Adrenal gland (tissue), 19 donors: ENCODE measurements at regions of chr5 and their contacts with region 1.

Region 1: GRCh38 chr5:140362860-140363630 is 3.1 kb downstream of the SLC4A9 start:
- DNase-seq: peak; percentile 77 to 91 (median 82)
- H3K4me3 ChIP-seq: peak overlapping the region in 1 of 4 donors; percentile 36
- H3K27ac ChIP-seq: no peak overlapping the region
- H3K4me1 ChIP-seq: peaks cover 0 to 5% of the 10 kb centered on the region in 2 donors
- H3K27me3 ChIP-seq: no peaks in the 10 kb centered on the region
- CTCF ChIP-seq: peak; percentile 73 to 93 (median 88)
- POLR2A ChIP-seq: no peak

Region 2: DNA sequence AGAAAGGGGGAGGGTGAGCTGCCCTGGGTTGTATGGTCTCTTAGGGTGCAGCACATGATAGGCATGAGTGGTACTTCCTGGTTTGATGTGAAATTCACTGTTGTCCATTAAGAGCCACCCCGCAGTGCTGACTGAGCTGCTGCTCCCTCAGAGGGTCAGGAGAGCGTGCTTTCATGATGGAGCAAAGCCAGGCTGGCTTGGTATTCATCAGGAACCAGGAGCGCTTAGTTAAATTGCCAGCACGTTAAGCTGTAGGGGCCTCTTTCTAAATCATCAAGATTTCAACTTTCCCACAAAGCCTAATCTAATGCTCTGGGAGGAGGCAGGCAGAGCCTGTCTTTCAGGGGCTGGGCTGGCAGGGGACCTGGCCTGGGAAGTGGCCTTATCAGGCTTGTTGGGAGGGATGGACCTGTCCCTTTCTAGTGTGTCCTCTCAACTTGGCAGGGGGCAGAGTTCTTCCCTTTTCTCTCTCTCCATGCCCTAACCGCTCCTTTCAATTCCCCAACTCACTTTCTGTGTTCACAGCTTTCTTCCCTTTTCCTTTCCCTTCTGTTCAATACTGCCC is 180.2 kb before region 1 on chr5:
- intact Hi-C with region 1: no loop called
- DNase-seq: peak in 2 of 7 donors; percentile 38 to 43
- H3K4me3 ChIP-seq: no peak overlapping the region
- H3K27ac ChIP-seq: peak overlapping the region in 2 of 5 donors; percentile 53 to 60
- H3K4me1 ChIP-seq: peaks cover 36 to 56% of the 10 kb centered on the region in 2 donors
- H3K27me3 ChIP-seq: no peaks in the 10 kb centered on the region
- CTCF ChIP-seq: no peak
- POLR2A ChIP-seq: no peak

Region 3: GRCh38 chr5:140647042-140647341 is 283.9 kb after region 1 on chr5:
- intact Hi-C with region 1: loop called in 1 of 2 experiments (anchors 10 kb)
- DNase-seq: no peak
- H3K4me3 ChIP-seq: peak overlapping the region; percentile 60 to 91 (median 78)
- H3K27ac ChIP-seq: peak overlapping the region in 4 of 5 donors; percentile 81 to 84 (median 82)
- H3K4me1 ChIP-seq: peaks cover 12 to 21% of the 10 kb centered on the region in 2 donors
- H3K27me3 ChIP-seq: no peaks in the 10 kb centered on the region
- CTCF ChIP-seq: no peak
- POLR2A ChIP-seq: no peak

Region 4: DNA sequence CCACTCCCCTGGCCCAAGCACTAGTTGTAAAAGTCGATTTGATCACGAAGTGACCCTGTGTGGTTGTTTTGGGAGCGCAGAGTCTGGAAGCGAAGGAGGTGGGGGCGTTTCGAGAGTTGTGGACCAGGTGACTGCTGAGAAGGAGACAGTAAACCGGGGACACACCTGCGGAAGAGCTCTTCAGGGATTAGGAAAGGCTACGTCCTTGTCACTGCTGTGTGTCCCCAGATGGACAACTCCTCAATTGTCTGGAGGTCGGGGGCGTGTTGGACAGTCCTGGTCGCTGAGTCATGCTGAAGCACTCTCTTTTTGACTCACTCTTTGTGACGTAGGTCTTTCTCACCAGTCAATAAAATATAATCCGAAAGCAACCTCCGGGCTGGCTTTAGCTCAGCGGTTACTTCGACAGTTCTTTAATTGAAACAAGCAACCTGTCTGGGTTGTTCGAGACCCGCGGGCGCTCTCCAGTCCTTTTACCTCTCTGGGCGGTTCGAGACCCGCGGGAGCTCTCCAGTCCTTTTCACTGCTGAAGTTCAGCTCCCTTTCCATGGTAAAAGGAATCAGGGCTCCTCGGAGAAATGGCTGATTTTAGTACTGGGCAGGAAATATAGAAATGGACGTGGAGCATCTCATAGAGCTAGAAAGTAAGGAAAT is 348.0 kb after region 1 on chr5:
- intact Hi-C with region 1: loop called in 1 of 2 experiments (anchors 10 kb)
- DNase-seq: peak; percentile 92 to 98 (median 95)
- H3K4me3 ChIP-seq: peak overlapping the region in 3 of 4 donors; percentile 42 to 50 (median 46)
- H3K27ac ChIP-seq: peak overlapping the region; percentile 77 to 92 (median 87)
- H3K4me1 ChIP-seq: no peaks in the 10 kb centered on the region
- H3K27me3 ChIP-seq: no peaks in the 10 kb centered on the region
- CTCF ChIP-seq: no peak
- POLR2A ChIP-seq: peak in 1 of 2 donors; percentile 81

Region 5: DNA sequence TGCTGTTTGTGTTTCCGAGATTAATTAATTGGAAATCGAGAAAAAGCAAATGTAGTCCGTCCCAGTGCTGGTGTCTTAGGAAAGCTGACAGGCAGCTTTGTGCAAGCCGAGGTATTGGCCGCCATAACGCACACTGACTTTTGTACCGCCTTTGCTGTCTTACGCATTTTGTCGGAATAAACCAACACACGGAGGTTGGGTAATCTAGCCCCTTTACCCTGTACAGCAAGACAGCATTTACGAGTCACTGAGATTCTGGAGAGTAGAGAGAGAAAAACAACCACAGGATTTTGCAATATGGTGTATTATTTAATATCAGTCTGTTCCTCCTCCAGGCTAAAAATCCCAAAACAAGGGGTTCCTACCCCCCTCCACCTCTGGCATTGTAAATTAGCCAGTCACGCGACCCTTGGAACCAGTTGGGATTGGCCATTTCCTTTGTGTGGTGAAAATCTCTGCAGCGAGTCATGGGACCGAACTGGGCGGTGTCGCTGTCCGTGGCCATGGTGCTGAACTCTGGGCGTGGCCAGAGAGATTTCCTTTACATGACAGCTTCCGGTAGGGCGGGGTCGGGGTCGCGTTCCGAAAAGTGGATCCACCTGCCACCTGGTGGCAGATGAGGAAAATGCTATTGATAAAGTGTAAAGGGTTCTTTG is 677.9 kb after region 1 on chr5:
- intact Hi-C with region 1: loop called in 1 of 2 experiments (anchors 10 kb)
- DNase-seq: peak; percentile 86 to 98 (median 90)
- H3K4me3 ChIP-seq: peak overlapping the region in 2 of 4 donors; percentile 7 to 45
- H3K27ac ChIP-seq: peak overlapping the region in 3 of 5 donors; percentile 52 to 82 (median 70)
- H3K4me1 ChIP-seq: peaks cover 2 to 5% of the 10 kb centered on the region in 2 donors
- H3K27me3 ChIP-seq: no peaks in the 10 kb centered on the region
- CTCF ChIP-seq: peak; percentile 54 to 83 (median 68)
- POLR2A ChIP-seq: peak; percentile 38 to 65